ENCODE measurements at regions of chr15 and their contacts with region 1.

Region 1: GRCh38 chr15:69058830-69059556 is 44.5 kb downstream of the NOX5 start:
- DNase-seq: peak; percentile 76
- ATAC-seq: peak; percentile 92
- H3K4me3 ChIP-seq: no peak overlapping the region
- H3K27ac ChIP-seq: peak overlapping the region; percentile 55; the same call in 1 of the 2 replicates
- H3K4me1 ChIP-seq: 0 out of 2 replicates have a peak, but pooled peaks cover 4% of the 10 kb centered on the region
- H3K27me3 ChIP-seq: no peaks in the 10 kb centered on the region; the same call in 1 of the 2 replicates
- CTCF ChIP-seq: peak; percentile 88

Region 2: GRCh38 chr15:69265347-69265955 is 206.5 kb after region 1 on chr15:
- CTCF ChIA-PET with region 1: no interaction called
- POLR2A ChIA-PET with region 1: no interaction called
- in situ Hi-C with region 1: no loop called
- intact Hi-C with region 1: loop called (anchors 1 kb)
- DNase-seq: no peak
- ATAC-seq: no peak
- H3K4me3 ChIP-seq: no peak overlapping the region
- H3K27ac ChIP-seq: no peak overlapping the region
- H3K4me1 ChIP-seq: no peaks in the 10 kb centered on the region
- H3K27me3 ChIP-seq: no peaks in the 10 kb centered on the region
- CTCF ChIP-seq: peak; percentile 69; the same call in 1 of the 2 replicates

Region 3: DNA sequence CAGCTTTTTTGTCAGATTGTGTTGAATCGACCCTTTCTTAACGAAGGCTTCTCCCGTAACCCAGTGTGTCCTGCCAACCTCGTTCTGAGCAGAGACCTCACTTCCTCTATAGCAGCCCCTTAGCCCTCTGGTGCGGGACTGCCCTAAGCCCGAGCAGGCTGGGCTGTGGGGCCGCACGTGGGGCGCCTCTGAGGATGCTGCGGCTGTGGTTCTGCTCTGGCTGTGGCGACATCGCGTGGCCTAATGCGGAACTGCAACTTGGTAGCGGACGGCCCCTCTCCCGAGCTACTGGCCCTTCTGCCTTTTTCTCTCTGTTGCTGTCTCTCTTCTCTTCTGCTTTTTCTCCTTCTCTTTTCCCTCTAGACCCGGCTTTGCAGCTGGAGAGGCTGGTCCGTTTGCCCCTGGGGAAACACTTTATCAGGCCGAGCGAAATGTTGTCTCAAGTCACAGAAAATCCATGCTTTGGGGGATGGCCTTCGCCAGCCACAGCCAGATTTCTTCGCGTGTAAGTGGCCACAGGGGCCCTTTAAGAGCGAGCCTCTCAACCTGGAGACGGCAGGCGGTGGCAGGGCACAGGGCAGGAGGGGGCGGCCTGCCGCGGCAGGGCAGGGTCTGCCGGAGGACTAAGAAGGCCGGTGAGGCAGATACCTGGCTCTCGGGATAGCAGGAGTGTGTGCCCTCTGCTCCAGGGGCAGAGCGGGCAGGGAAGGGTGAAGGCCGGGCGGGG is 335.7 kb after region 1 on chr15:
- CTCF ChIA-PET with region 1: interaction called, 4 read pairs
- POLR2A ChIA-PET with region 1: no interaction called
- in situ Hi-C with region 1: no loop called
- intact Hi-C with region 1: loop called (anchors 2 kb)
- DNase-seq: peak; percentile 51
- ATAC-seq: peak; percentile 92
- H3K4me3 ChIP-seq: peak overlapping the region in 1 of 2 experiments; percentile 23; a peak in 1 of 4 replicates
- H3K27ac ChIP-seq: no peak overlapping the region
- H3K4me1 ChIP-seq: peaks cover 3% of the 10 kb centered on the region; the same call in 1 of the 2 replicates
- H3K27me3 ChIP-seq: no peaks in the 10 kb centered on the region
- CTCF ChIP-seq: peak; percentile 97

Region 4: GRCh38 chr15:69413822-69414700 is 355.1 kb after region 1 on chr15 and contains the start of gene KIF23:
- CTCF ChIA-PET with region 1: no interaction called
- POLR2A ChIA-PET with region 1: no interaction called
- in situ Hi-C with region 1: no loop called
- intact Hi-C with region 1: loop called (anchors 5 kb)
- DNase-seq: peak; percentile 75
- ATAC-seq: peak; percentile 98
- H3K4me3 ChIP-seq: peak within 1 kb of the TSS; percentile 65 to 84
- H3K27ac ChIP-seq: peak within 1 kb of the TSS; percentile 96
- H3K4me1 ChIP-seq: peaks cover 22% of the 10 kb centered on the region; the same call in 1 of the 2 replicates
- H3K27me3 ChIP-seq: no peaks in the 10 kb centered on the region
- CTCF ChIP-seq: no peak
- total RNA-seq, gene KIF23: 82.5 TPM

Measured in Panc1 (cell line).